OCI-LY7 (cell line): ENCODE measurements at regions of chr13 and their contacts with region 1.

Region 1: DNA sequence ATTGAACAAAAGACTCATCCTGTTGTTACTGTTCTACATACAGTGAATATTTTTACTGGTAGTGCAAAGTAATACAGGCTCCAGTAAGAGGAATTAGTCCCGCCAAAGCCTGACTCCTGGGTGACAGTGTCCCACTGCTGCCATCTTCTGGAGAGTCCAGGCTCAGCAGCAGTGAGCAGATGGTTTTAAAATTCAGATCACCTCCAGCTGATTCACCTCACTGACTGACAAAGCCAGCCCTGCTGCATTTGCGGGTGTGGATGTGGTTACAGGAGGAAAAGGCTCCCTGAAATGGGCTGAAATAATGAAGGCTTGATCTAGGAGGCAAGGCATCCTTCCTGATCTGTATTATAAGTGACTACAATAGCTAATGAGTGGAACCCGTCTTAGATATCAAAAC is 18.3 kb downstream of the PABPC3 start:
- DNase-seq: peak; percentile 79
- H3K4me3 ChIP-seq: no peak overlapping the region
- H3K27ac ChIP-seq: no peak overlapping the region
- H3K4me1 ChIP-seq: peaks cover 27% of the 10 kb centered on the region
- CTCF ChIP-seq: peak; percentile 94

Region 2: GRCh38 chr13:25085125-25085742 is 29.0 kb before region 1 on chr13:
- CTCF ChIA-PET with region 1: no interaction called
- POLR2A ChIA-PET with region 1: no interaction called
- intact Hi-C with region 1: loop called (anchors 2 kb)
- DNase-seq: peak; percentile 59
- H3K4me3 ChIP-seq: no peak overlapping the region
- H3K27ac ChIP-seq: no peak overlapping the region
- H3K4me1 ChIP-seq: no peaks in the 10 kb centered on the region
- CTCF ChIP-seq: peak; percentile 86

Region 3: GRCh38 chr13:25171517-25172302 is 57.5 kb after region 1 on chr13 and contains the start of gene AMER2:
- CTCF ChIA-PET with region 1: no interaction called
- POLR2A ChIA-PET with region 1: no interaction called
- intact Hi-C with region 1: no loop called
- DNase-seq: no peak
- H3K4me3 ChIP-seq: no peak within 1 kb of the TSS
- H3K27ac ChIP-seq: no peak within 1 kb of the TSS
- H3K4me1 ChIP-seq: no peaks in the 10 kb centered on the region
- CTCF ChIP-seq: no peak
- total RNA-seq, gene AMER2: not detected in 2 replicates

Region 4: GRCh38 chr13:25329706-25330105 is 215.5 kb after region 1 on chr13:
- CTCF ChIA-PET with region 1: no interaction called
- POLR2A ChIA-PET with region 1: no interaction called
- intact Hi-C with region 1: no loop called
- DNase-seq: no peak
- H3K4me3 ChIP-seq: no peak overlapping the region
- H3K27ac ChIP-seq: no peak overlapping the region
- H3K4me1 ChIP-seq: no peaks in the 10 kb centered on the region
- CTCF ChIP-seq: no peak